ENCODE measurements at regions of chr1 and their contacts with region 1.

Region 1: GRCh38 chr1:178093205-178093957 is 523 bp upstream of the RASAL2 start:
- DNase-seq: peak; percentile 96
- H3K4me3 ChIP-seq: peak overlapping the region; percentile 48 to 93 (median 88)
- H3K27ac ChIP-seq: peak overlapping the region; percentile 68
- H3K4me1 ChIP-seq: peaks cover 25% of the 10 kb centered on the region
- H3K27me3 ChIP-seq: no peaks in the 10 kb centered on the region
- CTCF ChIP-seq: peak in 1 of 2 donors; percentile 10
- POLR2A ChIP-seq: peak; percentile 73

Region 2: GRCh38 chr1:178052650-178053461 is 40.5 kb before region 1 on chr1:
- CTCF ChIA-PET with region 1: interaction called, 4 read pairs
- POLR2A ChIA-PET with region 1: no interaction called
- dilution Hi-C with region 1: no loop called
- intact Hi-C with region 1: loop called (anchors 1 kb)
- DNase-seq: peak; percentile 48
- H3K4me3 ChIP-seq: no peak overlapping the region
- H3K27ac ChIP-seq: peak overlapping the region; percentile 66
- H3K4me1 ChIP-seq: peaks cover 43% of the 10 kb centered on the region
- H3K27me3 ChIP-seq: no peaks in the 10 kb centered on the region
- CTCF ChIP-seq: no peak
- POLR2A ChIP-seq: no peak

Region 3: GRCh38 chr1:178189814-178190213 is 96.4 kb after region 1 on chr1:
- CTCF ChIA-PET with region 1: interaction called, 11 read pairs
- POLR2A ChIA-PET with region 1: no interaction called
- dilution Hi-C with region 1: no loop called
- intact Hi-C with region 1: loop called (anchors 1 kb)
- DNase-seq: peak; percentile 48
- H3K4me3 ChIP-seq: no peak overlapping the region
- H3K27ac ChIP-seq: no peak overlapping the region
- H3K4me1 ChIP-seq: peaks cover 26% of the 10 kb centered on the region
- H3K27me3 ChIP-seq: no peaks in the 10 kb centered on the region
- CTCF ChIP-seq: peak; percentile 34 to 41
- POLR2A ChIP-seq: no peak

Region 4: DNA sequence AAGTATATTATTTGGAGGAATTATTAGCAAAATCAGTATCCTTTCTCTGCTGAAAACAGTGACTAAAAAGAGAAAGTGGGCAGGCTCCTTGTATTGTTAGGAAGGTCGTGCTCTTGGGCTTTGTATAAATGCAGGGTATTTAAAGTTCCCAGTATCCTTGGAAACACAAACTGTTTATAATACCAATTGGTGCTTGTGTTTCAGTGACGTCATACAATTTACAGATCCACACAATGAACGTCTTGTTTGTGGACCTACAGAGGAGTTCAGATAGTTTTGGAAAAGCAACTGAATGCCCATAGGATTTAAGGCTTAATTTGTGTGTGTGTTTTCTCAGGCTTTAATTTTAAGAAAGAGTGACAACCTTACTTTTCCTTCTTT is 168.7 kb after region 1 on chr1:
- CTCF ChIA-PET with region 1: no interaction called
- POLR2A ChIA-PET with region 1: no interaction called
- dilution Hi-C with region 1: no loop called
- intact Hi-C with region 1: loop called (anchors 5 kb)
- DNase-seq: peak; percentile 82
- H3K4me3 ChIP-seq: no peak overlapping the region
- H3K27ac ChIP-seq: peak overlapping the region; percentile 47
- H3K4me1 ChIP-seq: peaks cover 10% of the 10 kb centered on the region
- H3K27me3 ChIP-seq: no peaks in the 10 kb centered on the region
- CTCF ChIP-seq: no peak
- POLR2A ChIP-seq: no peak